ENCODE measurements at regions of chr20 and their contacts with region 1.

Region 1: DNA sequence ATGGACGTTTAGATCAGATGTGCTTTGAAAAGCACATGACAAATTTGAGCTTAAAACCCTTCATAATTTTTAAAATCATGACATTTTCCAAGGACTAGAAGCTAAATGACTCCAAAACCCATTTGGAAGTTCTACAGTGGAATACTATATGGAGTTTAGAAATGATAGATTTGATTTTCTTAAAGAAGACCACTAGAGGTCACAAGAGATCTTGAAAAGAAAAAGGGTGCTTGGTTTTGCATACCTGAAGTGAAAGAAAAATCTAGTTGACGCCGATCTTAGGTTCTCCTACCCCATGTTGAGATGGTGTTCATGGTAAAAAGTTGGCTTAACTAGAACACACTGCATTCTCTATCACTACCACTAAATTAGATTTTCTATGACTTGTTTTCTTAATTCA is 31.5 kb downstream of the CFAP61 start:
- DNase-seq: no peak
- ATAC-seq: peak; percentile 47
- H3K4me3 ChIP-seq: no peak overlapping the region
- H3K27ac ChIP-seq: no peak overlapping the region
- H3K4me1 ChIP-seq: no peaks in the 10 kb centered on the region
- H3K27me3 ChIP-seq: no peaks in the 10 kb centered on the region
- CTCF ChIP-seq: peak in 6 of 7 experiments; percentile 30 to 59 (median 51)
- POLR2A ChIP-seq: no peak

Region 2: DNA sequence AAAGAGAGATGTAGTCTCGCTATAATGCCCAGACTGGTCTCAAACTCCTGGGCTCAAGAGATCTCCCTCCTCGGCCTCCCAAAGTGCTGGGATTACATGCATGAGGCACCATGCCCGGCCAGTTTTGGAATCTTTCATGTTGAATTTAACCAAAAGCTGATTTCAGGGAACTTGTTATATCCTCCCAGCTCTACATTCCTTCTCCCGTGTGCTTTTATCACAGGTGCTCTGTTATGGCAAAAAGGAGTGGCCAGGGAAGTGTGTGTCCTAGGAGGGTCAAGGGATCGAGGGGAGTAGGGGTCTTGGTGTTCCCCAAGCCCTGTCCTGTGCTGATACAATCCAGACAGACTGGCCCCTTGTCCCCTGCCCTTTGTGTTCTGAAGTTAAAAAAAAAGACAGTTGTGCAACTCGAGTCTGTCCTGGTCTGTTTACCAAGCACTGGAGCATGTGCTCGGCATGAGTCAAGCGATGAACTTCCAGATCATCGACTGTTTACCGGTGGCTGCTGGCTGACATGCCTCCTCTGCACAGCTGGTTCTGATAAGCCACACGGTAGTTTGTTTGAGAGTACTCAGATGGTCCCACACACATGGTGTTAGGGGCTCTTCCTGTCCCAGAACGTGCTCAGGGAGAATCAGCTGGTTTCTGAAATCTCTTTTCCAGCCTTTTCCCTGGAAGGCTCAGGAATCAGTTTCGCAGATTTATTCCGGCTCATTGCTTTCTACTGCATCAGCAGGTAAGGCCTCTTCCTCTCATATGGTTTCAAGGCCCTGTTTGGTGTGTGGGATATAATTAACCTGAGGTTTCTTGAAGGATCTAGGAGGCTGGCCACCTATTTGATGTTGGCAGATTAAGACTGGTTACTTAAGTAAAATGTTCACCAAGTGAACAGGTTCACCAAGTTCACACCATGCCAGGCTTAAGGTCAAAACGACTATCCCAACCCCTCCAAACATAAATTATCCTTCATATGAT is 119.2 kb before region 1 on chr20:
- intact Hi-C with region 1: no loop called
- DNase-seq: peak; percentile 50 to 80 (median 72)
- ATAC-seq: peak; percentile 81
- H3K4me3 ChIP-seq: no peak overlapping the region
- H3K27ac ChIP-seq: peak overlapping the region; percentile 49 to 73 (median 62)
- H3K4me1 ChIP-seq: peaks cover 39% of the 10 kb centered on the region
- H3K27me3 ChIP-seq: no peaks in the 10 kb centered on the region
- CTCF ChIP-seq: no peak
- POLR2A ChIP-seq: no peak

Region 3: GRCh38 chr20:20237093-20237959 is 153.5 kb after region 1 on chr20:
- intact Hi-C with region 1: loop called (anchors 10 kb)
- DNase-seq: peak; percentile 42 to 49 (median 48)
- ATAC-seq: peak; percentile 68
- H3K4me3 ChIP-seq: no peak overlapping the region
- H3K27ac ChIP-seq: no peak overlapping the region
- H3K4me1 ChIP-seq: no peaks in the 10 kb centered on the region
- H3K27me3 ChIP-seq: no peaks in the 10 kb centered on the region
- CTCF ChIP-seq: peak in 6 of 7 experiments; percentile 55 to 69 (median 65)
- POLR2A ChIP-seq: no peak

Region 4: GRCh38 chr20:20721369-20721888 is 637.6 kb after region 1 on chr20:
- intact Hi-C with region 1: no loop called
- DNase-seq: no peak
- ATAC-seq: no peak
- H3K4me3 ChIP-seq: no peak overlapping the region
- H3K27ac ChIP-seq: no peak overlapping the region
- H3K4me1 ChIP-seq: no peaks in the 10 kb centered on the region
- H3K27me3 ChIP-seq: no peaks in the 10 kb centered on the region
- CTCF ChIP-seq: no peak
- POLR2A ChIP-seq: no peak

Measured in body of pancreas (tissue), 4 donors.